ENCODE measurements at regions of chr7 and their contacts with region 1.

Region 1: DNA sequence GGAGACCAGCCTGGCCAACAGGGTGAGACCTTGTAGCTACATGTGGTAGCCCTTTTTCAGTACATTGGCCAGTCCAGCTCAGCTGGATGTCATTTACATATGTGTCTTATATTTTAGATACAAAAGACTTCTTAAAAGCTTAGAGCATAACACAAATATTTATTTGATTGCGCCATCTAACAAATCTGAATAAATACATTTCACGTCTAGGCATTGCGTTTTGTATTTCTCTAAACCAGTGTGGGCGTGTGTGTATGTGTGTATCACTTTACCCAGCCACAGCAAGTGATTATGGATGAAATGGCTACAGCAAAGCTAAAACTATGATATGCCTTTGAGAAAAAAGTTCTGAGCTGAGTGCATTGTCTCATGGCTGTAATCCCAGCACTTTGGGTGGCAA is 14.0 kb downstream of the RABGEF1 start:
- DNase-seq: no peak
- H3K4me3 ChIP-seq: no peak overlapping the region
- H3K27ac ChIP-seq: no peak overlapping the region
- H3K4me1 ChIP-seq: peaks cover 5% of the 10 kb centered on the region
- H3K27me3 ChIP-seq: no peaks in the 10 kb centered on the region
- CTCF ChIP-seq: no peak
- POLR2A ChIP-seq: no peak

Region 2: GRCh38 chr7:66493235-66494181 is 261.0 kb before region 1 on chr7:
- intact Hi-C with region 1: loop called (anchors 5 kb)
- DNase-seq: peak; percentile 97 to 100
- H3K4me3 ChIP-seq: peak overlapping the region; percentile 81 to 84
- H3K27ac ChIP-seq: peak overlapping the region; percentile 93
- H3K4me1 ChIP-seq: peaks cover 19% of the 10 kb centered on the region
- H3K27me3 ChIP-seq: no peaks in the 10 kb centered on the region
- CTCF ChIP-seq: peak in 1 of 3 experiments; percentile 14
- POLR2A ChIP-seq: peak; percentile 70 to 91

Region 3: DNA sequence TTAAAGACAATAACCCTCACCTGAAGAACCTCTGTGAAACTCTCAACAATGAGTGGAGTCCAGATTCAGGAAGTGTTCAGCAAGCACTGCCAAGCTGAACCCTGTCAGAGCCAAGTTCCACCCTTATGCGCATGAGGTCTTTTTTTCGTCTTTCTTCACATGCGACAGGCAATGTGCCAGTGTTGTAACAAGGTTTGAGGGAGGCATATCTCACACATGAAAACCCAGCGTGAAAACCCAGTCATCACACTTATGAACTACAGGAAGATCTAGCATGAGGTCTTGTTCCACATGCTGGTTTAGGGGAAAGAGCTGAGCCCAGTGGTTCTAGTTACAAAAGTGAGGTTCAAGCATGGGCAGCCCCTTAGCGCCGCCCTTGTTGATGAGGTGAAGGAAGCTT is 35.7 kb after region 1 on chr7:
- intact Hi-C with region 1: no loop called
- DNase-seq: no peak
- H3K4me3 ChIP-seq: no peak overlapping the region
- H3K27ac ChIP-seq: no peak overlapping the region
- H3K4me1 ChIP-seq: no peaks in the 10 kb centered on the region
- H3K27me3 ChIP-seq: no peaks in the 10 kb centered on the region
- CTCF ChIP-seq: no peak
- POLR2A ChIP-seq: no peak